ENCODE measurements at regions of chr15 and their contacts with region 1.

Region 1: DNA sequence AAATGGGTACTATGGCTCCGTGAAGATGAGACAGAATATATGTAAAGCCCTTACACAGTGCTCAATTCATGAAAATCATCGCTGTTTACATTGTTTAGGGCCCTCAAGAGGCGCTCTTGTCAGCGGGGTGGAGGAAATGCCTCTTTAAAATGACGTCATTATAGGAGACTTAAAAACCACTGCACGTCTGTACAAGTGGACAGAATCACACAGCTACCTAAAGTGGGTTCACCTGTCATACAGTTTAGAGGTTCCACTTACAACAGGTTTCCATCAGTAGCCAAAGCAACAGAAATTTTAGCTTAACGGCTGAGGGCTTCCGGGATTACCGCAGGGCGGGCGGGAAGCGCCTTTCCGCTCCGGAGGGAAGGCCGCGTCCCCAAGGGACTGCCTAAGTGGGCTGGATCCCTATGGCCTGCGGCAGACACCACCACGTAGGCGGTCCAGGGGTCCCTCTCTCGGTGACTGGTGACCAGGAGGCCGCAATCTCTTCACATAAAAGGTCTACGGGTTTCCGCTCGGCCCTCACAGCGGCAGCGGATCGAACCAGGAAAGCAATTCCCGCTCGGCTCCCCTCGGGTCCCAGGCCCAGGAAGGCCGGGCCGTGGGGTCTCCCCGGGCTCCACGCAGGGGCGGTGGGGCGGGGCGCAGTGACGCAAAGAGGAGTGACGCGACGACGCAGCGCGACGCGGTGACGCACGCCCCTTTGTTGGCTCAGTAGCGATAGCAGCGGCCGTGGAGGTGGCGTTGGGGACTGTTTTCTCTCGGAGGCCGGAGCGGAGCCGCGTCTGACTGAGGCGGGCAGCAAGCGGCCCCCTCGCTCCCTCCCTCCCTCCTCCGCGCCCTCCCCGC is at the start of gene ARIH1:
- DNase-seq: peak; percentile 97 to 99
- ATAC-seq: peak; percentile 95 to 97 (median 96)
- H3K4me3 ChIP-seq: peak within 1 kb of the TSS; percentile 90
- H3K27ac ChIP-seq: peak within 1 kb of the TSS; percentile 100
- H3K4me1 ChIP-seq: peaks cover 30% of the 10 kb centered on the region
- H3K27me3 ChIP-seq: no peaks in the 10 kb centered on the region
- CTCF ChIP-seq: peak; percentile 34
- total RNA-seq, gene ARIH1: 181 to 253 (median 204) TPM

Region 2: GRCh38 chr15:72339777-72340177 is 134.1 kb before region 1 on chr15:
- intact Hi-C with region 1: no loop called
- DNase-seq: no peak
- ATAC-seq: peak in 2 of 4 donors; percentile 39 to 41
- H3K4me3 ChIP-seq: no peak overlapping the region
- H3K27ac ChIP-seq: no peak overlapping the region
- H3K4me1 ChIP-seq: no peaks in the 10 kb centered on the region
- H3K27me3 ChIP-seq: no peaks in the 10 kb centered on the region
- CTCF ChIP-seq: no peak

Region 3: DNA sequence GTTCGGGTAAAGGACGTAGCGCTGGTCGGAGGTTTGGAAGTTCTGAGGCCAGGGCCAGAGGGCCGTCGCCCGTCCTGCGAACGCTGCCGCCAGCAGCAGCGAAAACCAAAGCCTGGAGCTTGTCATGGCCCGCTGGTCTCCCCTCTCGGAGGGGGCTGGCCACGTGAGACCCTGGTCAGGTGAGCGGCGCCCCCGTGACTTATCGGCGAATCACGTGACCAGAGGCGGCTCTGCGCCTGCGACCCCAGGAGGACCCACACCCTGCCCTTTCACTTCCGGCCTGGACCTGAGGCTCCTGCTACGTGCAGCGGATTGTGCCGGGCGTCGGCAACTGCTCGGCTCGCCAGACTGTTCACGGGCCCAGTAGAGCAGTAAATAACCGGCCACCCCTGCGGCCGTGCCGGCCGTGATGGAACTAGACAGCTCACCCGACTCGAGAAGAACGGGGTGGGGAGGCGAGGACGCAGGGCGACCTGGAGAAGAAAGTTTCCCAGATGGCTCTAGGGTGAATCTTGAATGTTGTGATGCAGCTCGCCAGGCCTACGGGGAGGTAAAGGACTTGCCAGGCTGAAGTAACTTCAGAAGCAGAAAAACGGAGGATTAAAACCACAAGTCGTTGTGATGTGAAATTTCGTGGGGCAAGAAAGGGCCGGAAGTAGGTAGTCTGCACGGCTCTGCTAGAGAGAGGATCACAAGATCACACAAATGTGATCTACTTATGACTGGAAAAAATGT is 97.8 kb before region 1 on chr15 and contains the start of gene HEXA:
- intact Hi-C with region 1: loop called (anchors 2 to 5 kb)
- DNase-seq: peak; percentile 98 to 100
- ATAC-seq: peak; percentile 98 to 99 (median 98)
- H3K4me3 ChIP-seq: peak within 1 kb of the TSS; percentile 93
- H3K27ac ChIP-seq: peak within 1 kb of the TSS; percentile 96
- H3K4me1 ChIP-seq: peaks cover 33% of the 10 kb centered on the region
- H3K27me3 ChIP-seq: no peaks in the 10 kb centered on the region
- CTCF ChIP-seq: no peak
- total RNA-seq, gene HEXA: 38.1 to 53.1 (median 46.8) TPM

Region 4: GRCh38 chr15:72685925-72686794 is 212.3 kb after region 1 on chr15 and contains the starts of genes BBS4 and HIGD2B:
- intact Hi-C with region 1: loop called in 1 of 2 experiments (anchors 10 kb)
- DNase-seq: peak; percentile 87 to 93
- ATAC-seq: peak; percentile 96 to 98 (median 98)
- H3K4me3 ChIP-seq: peak within 1 kb of the TSS; percentile 86
- H3K27ac ChIP-seq: peak within 1 kb of the TSS; percentile 87
- H3K4me1 ChIP-seq: peaks cover 9% of the 10 kb centered on the region
- H3K27me3 ChIP-seq: no peaks in the 10 kb centered on the region
- CTCF ChIP-seq: no peak
- total RNA-seq, gene BBS4: 12.0 to 20.7 (median 14.7) TPM
- total RNA-seq, gene HIGD2B: not detected

Measured in psoas muscle (tissue), 8 donors.